HCT116 (cell line): ENCODE measurements at regions of chr5 and their contacts with region 1.

Region 1: DNA sequence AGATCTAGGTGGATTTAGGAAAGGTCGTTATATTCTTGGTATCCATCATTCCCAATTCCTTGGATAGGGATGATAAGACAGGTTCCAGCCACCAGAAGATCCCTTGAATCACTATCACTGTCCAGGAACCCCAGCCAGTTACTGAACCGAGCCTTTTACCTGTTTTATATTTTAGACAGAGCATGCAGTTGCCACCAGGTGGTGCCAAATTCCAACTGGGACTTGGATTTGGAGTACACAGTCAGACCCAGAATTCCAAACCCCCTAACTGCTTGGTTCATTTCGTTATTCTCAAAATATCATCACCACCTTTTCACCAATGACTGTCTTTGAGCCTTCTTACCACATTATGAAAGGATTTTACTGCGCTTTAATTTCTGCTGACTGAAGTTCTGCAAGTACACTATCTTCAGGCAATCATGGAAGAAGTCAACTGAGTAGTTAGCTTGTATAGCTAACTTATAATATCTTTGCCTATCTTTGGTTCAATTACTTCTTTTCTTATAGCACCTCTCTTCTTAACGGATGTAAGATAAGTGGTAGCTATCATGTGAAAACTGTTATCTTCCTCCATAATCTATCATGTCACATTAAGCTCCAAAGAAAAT is 191.8 kb downstream of the PRR16 start:
- DNase-seq: peak; percentile 40
- ATAC-seq: peak; percentile 93
- H3K4me3 ChIP-seq: no peak overlapping the region
- H3K27ac ChIP-seq: no peak overlapping the region
- H3K4me1 ChIP-seq: no peaks in the 10 kb centered on the region
- H3K27me3 ChIP-seq: no peaks in the 10 kb centered on the region
- CTCF ChIP-seq: peak; percentile 56 to 83 (median 75); a peak in 5 of 6 replicates
- POLR2A ChIP-seq: no peak
- RAD21 ChIP-seq: peak; percentile 77

Region 2: GRCh38 chr5:119943148-119943547 is 712.8 kb before region 1 on chr5:
- CTCF ChIA-PET with region 1: no interaction called
- POLR2A ChIA-PET with region 1: no interaction called
- RAD21 ChIA-PET with region 1: no interaction called
- intact Hi-C with region 1: loop called (anchors 10 kb)
- DNase-seq: no peak
- ATAC-seq: peak; percentile 55; the same call in 1 of the 2 replicates
- H3K4me3 ChIP-seq: no peak overlapping the region
- H3K27ac ChIP-seq: no peak overlapping the region
- H3K4me1 ChIP-seq: no peaks in the 10 kb centered on the region
- H3K27me3 ChIP-seq: no peaks in the 10 kb centered on the region
- CTCF ChIP-seq: peak in 1 of 3 experiments; percentile 37; a peak in 1 of 6 replicates
- POLR2A ChIP-seq: no peak
- RAD21 ChIP-seq: peak; percentile 58

Region 3: GRCh38 chr5:120803282-120803681 is 147.3 kb after region 1 on chr5:
- CTCF ChIA-PET with region 1: interaction called, 4 read pairs
- POLR2A ChIA-PET with region 1: no interaction called
- RAD21 ChIA-PET with region 1: no interaction called
- intact Hi-C with region 1: loop called (anchors 2 kb)
- DNase-seq: peak; percentile 8
- ATAC-seq: 0 out of 2 replicates have a peak, but pooled peaks have one; percentile 42
- H3K4me3 ChIP-seq: no peak overlapping the region
- H3K27ac ChIP-seq: no peak overlapping the region
- H3K4me1 ChIP-seq: no peaks in the 10 kb centered on the region
- H3K27me3 ChIP-seq: no peaks in the 10 kb centered on the region
- CTCF ChIP-seq: peak in 2 of 3 experiments; percentile 38 to 54; a peak in 3 of 6 replicates
- POLR2A ChIP-seq: no peak
- RAD21 ChIP-seq: peak; percentile 49

Region 4: DNA sequence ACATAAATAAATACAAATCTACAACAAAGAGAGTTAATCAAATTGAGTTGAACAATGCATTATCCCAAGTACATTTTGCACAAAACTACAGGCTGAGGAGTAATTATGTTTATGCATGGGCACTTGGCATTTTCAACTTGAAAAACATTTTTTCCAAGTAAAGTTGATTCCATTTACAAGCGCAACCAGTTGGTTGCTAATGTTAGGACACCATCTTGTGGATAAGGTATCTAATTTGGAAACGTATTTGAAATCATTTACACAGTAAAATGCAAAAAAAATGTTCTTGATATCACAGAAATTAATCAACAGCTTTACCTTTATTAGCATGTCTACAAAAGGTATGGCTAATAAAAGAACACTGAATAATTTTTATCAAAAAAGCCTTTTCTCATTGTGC is 1214.6 kb after region 1 on chr5:
- CTCF ChIA-PET with region 1: interaction called, 4 read pairs
- POLR2A ChIA-PET with region 1: no interaction called
- RAD21 ChIA-PET with region 1: no interaction called
- intact Hi-C with region 1: loop called (anchors 1 kb)
- DNase-seq: peak; percentile 4
- ATAC-seq: no peak
- H3K4me3 ChIP-seq: no peak overlapping the region
- H3K27ac ChIP-seq: no peak overlapping the region
- H3K4me1 ChIP-seq: no peaks in the 10 kb centered on the region
- H3K27me3 ChIP-seq: no peaks in the 10 kb centered on the region
- CTCF ChIP-seq: peak in 2 of 3 experiments; percentile 11 to 28; a peak in 2 of 6 replicates
- POLR2A ChIP-seq: no peak
- RAD21 ChIP-seq: peak; percentile 66

Region 5: GRCh38 chr5:121949867-121950266 is 1293.9 kb after region 1 on chr5:
- CTCF ChIA-PET with region 1: interaction called, 18 read pairs
- POLR2A ChIA-PET with region 1: no interaction called
- RAD21 ChIA-PET with region 1: interaction called, 3 to 4 read pairs
- intact Hi-C with region 1: loop called (anchors 2 kb)
- DNase-seq: peak; percentile 29
- ATAC-seq: peak; percentile 69
- H3K4me3 ChIP-seq: no peak overlapping the region
- H3K27ac ChIP-seq: no peak overlapping the region
- H3K4me1 ChIP-seq: no peaks in the 10 kb centered on the region
- H3K27me3 ChIP-seq: no peaks in the 10 kb centered on the region
- CTCF ChIP-seq: peak; percentile 53 to 75 (median 57); a peak in 5 of 6 replicates
- POLR2A ChIP-seq: no peak
- RAD21 ChIP-seq: peak; percentile 87